ENCODE measurements at regions of chr5 and their contacts with region 1.

Region 1: DNA sequence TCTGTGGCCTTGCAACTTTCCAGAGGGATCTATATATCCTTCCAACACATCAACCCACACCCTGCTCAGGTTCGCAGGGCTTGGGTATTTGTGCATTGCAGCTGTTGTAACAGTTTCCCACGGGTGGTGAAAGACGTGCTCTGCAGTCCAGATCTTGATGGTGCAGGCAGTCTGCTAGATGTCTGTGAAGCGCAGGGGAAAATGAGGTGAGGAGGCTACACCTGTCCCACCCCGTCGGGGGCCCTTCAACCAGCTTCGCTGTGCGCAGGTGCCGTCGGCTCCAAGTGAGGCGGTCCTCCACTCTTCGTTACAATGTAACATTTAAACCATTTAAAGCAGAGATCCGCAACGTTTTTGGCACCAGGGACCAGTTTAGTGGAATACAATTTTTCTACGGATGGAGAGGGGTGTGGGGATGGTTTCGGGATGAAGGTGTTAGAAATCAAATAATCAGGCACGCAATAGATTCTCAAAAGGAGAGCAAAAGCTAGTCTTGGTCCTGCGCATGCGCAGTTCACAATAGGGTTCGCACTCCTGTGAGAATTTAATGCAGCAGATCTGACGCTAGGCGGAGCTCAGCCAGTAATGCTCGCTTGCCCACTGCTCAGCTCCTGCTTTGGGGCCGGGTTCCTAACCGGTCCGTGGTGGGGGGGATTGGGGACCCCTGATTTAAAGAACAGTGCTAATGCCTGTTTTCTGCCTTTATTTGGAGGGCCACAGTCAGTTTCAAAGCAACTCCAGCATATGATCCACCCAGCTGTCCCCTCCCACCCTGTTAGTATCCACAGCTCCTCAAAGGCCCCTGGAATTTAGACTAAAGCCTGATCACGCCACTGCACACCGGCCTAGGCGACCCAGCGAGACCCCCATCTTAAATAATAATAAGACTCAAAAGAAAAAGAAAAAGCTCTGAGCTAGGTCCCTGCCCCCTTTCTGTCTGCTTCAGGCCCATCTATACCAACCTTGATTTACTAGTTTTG is 97.1 kb upstream of the SELENOP start:
- DNase-seq: peak; percentile 94
- ATAC-seq: peak; percentile 94
- H3K4me3 Mint-ChIP-seq: peak overlapping the region; percentile 90
- H3K27ac Mint-ChIP-seq: peak overlapping the region; percentile 72
- H3K4me1 Mint-ChIP-seq: peaks cover 13% of the 10 kb centered on the region
- H3K27me3 Mint-ChIP-seq: peaks cover 10% of the 10 kb centered on the region
- CTCF ChIP-seq: peak; percentile 94

Region 2: GRCh38 chr5:42889311-42889933 is 19.4 kb before region 1 on chr5:
- CTCF ChIA-PET with region 1: interaction called, 18 read pairs
- POLR2A ChIA-PET with region 1: no interaction called
- intact Hi-C with region 1: no loop called
- DNase-seq: peak; percentile 85
- ATAC-seq: peak; percentile 90
- H3K4me3 Mint-ChIP-seq: no peak overlapping the region
- H3K27ac Mint-ChIP-seq: no peak overlapping the region
- H3K4me1 Mint-ChIP-seq: no peaks in the 10 kb centered on the region
- H3K27me3 Mint-ChIP-seq: peaks cover 6% of the 10 kb centered on the region
- CTCF ChIP-seq: peak; percentile 79

Region 3: GRCh38 chr5:42950440-42951292 is 41.9 kb after region 1 on chr5:
- CTCF ChIA-PET with region 1: interaction called, 74 read pairs
- POLR2A ChIA-PET with region 1: interaction called, 6 read pairs
- intact Hi-C with region 1: loop called (anchors 2 kb)
- DNase-seq: peak; percentile 82
- ATAC-seq: peak; percentile 46
- H3K4me3 Mint-ChIP-seq: peak overlapping the region; percentile 89
- H3K27ac Mint-ChIP-seq: peak overlapping the region; percentile 97
- H3K4me1 Mint-ChIP-seq: peaks cover 19% of the 10 kb centered on the region
- H3K27me3 Mint-ChIP-seq: no peaks in the 10 kb centered on the region
- CTCF ChIP-seq: no peak

Region 4: DNA sequence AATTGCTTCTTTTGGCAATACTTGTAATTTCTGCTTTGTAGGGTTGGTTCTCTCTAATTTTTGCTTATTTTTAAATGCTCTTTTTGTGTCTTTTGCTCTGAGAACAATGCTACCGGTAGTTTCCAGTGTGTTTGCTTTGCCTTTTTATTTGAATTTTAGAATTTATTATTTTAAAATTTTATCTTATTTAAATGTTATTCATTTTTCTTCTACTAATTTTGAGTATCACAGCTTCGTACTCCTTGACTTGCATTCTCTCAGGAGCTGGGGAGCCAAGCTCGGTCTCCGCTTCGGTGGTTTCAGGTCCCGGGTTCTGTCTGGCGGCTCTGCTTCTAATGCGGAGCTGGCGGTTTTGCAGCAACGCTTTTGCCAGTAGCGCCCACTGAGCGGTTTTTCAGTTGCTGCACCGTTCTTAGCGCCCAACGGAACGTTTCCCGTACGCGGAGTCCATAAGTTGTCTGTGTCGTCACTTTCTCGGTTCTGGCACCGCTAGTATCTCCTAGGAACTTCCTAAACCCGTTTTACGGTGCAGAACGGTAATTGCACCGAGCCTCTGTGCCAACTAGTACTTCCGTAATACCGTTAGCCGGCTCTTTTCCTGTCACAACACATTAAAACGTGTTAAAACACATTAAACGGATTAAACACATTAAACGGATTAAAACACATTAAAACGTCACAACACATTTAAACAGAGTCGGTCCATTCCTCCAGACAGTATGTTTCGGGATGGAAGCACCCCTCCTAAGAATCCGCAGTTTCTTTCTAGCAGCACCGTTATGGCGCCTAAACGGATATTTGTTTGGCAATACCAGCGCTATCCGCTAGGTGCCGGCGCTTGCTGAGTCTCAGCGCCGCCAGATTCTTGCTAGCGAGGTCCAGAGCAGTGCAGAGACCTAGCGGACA is 85.7 kb after region 1 on chr5:
- CTCF ChIA-PET with region 1: interaction called, 70 read pairs
- POLR2A ChIA-PET with region 1: interaction called, 10 read pairs
- intact Hi-C with region 1: loop called (anchors 2 kb)
- DNase-seq: peak; percentile 94
- ATAC-seq: peak; percentile 70
- H3K4me3 Mint-ChIP-seq: peak overlapping the region; percentile 90
- H3K27ac Mint-ChIP-seq: peak overlapping the region; percentile 99
- H3K4me1 Mint-ChIP-seq: peaks cover 20% of the 10 kb centered on the region
- H3K27me3 Mint-ChIP-seq: no peaks in the 10 kb centered on the region
- CTCF ChIP-seq: peak; percentile 85

Region 5: DNA sequence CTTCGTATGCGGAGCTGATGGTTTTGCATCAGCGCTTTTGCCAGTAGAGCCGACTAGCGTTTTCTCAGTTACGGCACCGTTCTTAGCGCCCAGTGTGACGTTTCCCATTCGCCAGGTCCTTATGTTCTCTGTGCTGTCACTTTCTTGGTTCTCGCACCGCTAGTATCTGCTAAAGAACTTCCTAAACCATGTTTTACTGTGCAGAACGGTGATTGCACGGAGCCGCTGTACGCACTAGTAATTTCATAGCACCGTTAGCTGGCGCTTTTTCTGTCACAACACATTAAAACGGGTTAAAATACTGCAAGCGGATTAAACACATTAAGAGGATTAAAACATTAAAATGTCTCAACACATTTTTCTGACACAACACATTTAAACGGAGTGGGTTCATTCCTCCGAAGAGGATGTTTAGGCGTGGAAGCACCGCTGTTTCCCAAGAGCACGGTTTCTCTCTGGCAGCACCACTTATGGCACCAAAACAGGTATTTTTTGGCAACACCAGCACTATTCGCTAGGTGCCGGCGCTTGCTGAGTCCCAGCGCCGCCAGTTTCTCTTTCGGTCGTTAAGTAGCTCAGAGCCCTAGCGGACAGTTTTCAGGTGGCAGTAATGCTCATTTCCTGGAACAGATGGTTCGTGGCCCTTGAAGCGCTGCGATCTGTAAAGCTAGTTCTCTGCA is 111.0 kb after region 1 on chr5:
- CTCF ChIA-PET with region 1: interaction called, 14 read pairs
- POLR2A ChIA-PET with region 1: interaction called, 3 read pairs
- intact Hi-C with region 1: no loop called
- DNase-seq: peak; percentile 93
- ATAC-seq: peak; percentile 76
- H3K4me3 Mint-ChIP-seq: peak overlapping the region; percentile 96
- H3K27ac Mint-ChIP-seq: peak overlapping the region; percentile 99
- H3K4me1 Mint-ChIP-seq: peaks cover 34% of the 10 kb centered on the region
- H3K27me3 Mint-ChIP-seq: no peaks in the 10 kb centered on the region
- CTCF ChIP-seq: peak; percentile 75

Region 6: DNA sequence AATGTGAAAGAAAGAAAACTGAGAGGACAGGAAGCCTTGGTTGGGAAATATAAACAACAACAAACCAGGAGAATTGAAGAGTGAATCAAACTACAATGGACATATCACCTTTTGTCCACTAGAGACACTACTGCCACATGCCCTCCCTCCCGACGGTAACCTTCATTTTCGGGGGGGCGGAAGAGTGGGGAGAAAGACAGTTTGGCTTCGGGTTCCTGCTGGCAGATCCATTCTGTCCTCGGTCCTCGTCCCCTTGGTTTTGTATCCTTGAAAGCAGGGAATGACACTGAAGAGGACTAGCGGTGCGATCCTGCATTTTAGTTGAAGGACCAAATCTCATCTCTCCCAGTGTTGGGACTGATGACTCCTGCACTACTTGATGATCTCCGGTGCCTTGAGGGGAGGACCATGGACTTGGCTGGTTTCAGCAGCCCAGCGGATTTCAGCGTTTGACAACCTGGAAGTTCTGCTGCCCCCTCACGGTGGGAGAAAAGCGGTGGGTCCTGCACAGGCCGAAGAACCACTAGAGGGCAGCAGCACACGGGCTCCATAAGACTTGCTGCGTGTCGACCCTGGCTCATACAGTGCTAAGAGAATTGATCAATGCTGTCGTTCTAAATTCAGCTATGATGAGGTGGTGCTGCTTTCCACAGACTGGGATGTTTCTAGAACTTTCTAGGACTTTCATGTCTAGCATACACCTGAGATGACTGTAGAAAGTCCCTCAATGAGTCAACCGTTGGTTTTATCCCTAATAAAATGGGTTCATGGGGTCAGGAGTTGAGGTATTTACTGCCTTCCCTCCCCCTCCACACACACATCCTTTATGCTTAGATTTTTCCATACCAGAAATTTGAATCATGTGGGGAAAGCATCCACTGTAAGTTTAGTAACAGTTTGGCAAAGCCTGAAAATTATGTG is 196.8 kb after region 1 on chr5:
- CTCF ChIA-PET with region 1: interaction called, 17 read pairs
- POLR2A ChIA-PET with region 1: no interaction called
- intact Hi-C with region 1: no loop called
- DNase-seq: peak; percentile 93
- ATAC-seq: peak; percentile 94
- H3K4me3 Mint-ChIP-seq: peak overlapping the region; percentile 71
- H3K27ac Mint-ChIP-seq: peak overlapping the region; percentile 84
- H3K4me1 Mint-ChIP-seq: peaks cover 38% of the 10 kb centered on the region
- H3K27me3 Mint-ChIP-seq: no peaks in the 10 kb centered on the region
- CTCF ChIP-seq: peak; percentile 99

Region 7: GRCh38 chr5:43129161-43129560 is 220.4 kb after region 1 on chr5:
- CTCF ChIA-PET with region 1: no interaction called
- POLR2A ChIA-PET with region 1: no interaction called
- intact Hi-C with region 1: no loop called
- DNase-seq: no peak
- ATAC-seq: no peak
- H3K4me3 Mint-ChIP-seq: no peak overlapping the region
- H3K27ac Mint-ChIP-seq: no peak overlapping the region
- H3K4me1 Mint-ChIP-seq: peaks cover 45% of the 10 kb centered on the region
- H3K27me3 Mint-ChIP-seq: no peaks in the 10 kb centered on the region
- CTCF ChIP-seq: no peak